Activated B cell treated with CpG ODN at 0.5 μM for 24 hours (primary cell): ENCODE measurements at regions of chr14 and their contacts with region 1.

Region 1: DNA sequence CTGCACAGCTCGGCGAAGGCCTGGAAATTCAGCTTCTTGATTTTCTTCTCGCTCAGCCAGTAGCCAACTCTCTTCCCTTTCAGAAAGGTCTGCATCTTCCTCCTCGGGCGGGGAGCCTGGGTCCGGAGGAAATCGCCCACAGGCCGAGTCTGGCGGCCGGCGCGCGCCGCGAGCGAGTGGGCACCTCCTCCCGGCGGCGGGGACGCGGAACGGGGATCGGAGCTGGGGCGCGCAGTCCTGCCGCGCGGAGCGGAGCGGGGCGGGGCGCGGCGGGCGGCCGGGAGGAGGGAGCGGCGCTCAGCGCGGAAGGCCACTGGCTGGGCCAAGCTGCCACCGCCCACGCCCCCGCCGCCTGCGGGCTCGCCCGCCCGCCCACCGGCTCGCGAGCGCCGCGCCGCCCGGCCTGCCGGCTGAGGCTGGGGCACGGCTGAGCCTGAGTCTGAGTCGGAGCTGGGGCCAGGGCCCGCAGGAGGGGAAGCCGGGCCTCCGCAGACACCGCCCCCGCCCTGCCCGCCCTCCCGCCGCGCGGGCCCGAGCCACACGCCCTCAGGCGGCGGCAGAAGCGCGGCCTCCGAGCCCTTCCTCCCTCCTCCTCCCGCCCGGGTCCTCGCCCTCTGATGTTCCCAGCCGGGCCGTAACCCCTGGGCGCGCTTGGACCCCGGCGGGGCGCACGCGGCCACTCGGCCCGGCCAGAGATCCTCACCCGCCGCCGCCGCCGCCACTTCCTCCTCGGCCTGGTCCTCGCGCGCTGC is 480 bp downstream of the ITPK1 start:
- DNase-seq: peak; percentile 87
- ATAC-seq: peak; percentile 77
- H3K4me3 Mint-ChIP-seq: peak overlapping the region; percentile 91
- H3K27ac Mint-ChIP-seq: peak overlapping the region; percentile 73
- H3K4me1 Mint-ChIP-seq: peaks cover 30% of the 10 kb centered on the region
- H3K27me3 Mint-ChIP-seq: no peaks in the 10 kb centered on the region
- CTCF ChIP-seq: no peak

Region 2: DNA sequence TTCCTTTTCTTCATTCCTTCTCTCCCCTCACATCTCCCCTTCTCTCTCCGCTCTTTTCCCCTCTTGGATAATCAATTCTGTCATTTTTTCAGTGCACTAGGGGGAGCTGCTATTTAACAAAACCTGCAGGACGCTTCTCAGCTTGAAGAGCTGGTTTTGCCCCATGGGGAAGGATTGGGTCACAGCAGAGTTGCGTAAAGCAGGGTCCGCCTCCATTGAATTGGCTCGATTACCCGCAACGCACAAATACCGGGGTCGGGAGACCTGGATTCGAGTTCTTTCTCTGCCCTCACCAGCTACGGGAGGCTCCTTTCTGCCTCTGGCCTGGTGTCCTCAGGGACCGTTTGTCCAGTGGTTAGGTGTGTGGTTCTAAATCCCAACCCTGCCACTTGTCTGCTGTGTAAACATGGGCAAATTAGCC is 234.4 kb before region 1 on chr14:
- CTCF ChIA-PET with region 1: no interaction called
- POLR2A ChIA-PET with region 1: no interaction called
- intact Hi-C with region 1: no loop called
- DNase-seq: no peak
- ATAC-seq: no peak
- H3K4me3 Mint-ChIP-seq: no peak overlapping the region
- H3K27ac Mint-ChIP-seq: no peak overlapping the region
- H3K4me1 Mint-ChIP-seq: no peaks in the 10 kb centered on the region
- H3K27me3 Mint-ChIP-seq: peaks cover 35% of the 10 kb centered on the region
- CTCF ChIP-seq: no peak

Region 3: DNA sequence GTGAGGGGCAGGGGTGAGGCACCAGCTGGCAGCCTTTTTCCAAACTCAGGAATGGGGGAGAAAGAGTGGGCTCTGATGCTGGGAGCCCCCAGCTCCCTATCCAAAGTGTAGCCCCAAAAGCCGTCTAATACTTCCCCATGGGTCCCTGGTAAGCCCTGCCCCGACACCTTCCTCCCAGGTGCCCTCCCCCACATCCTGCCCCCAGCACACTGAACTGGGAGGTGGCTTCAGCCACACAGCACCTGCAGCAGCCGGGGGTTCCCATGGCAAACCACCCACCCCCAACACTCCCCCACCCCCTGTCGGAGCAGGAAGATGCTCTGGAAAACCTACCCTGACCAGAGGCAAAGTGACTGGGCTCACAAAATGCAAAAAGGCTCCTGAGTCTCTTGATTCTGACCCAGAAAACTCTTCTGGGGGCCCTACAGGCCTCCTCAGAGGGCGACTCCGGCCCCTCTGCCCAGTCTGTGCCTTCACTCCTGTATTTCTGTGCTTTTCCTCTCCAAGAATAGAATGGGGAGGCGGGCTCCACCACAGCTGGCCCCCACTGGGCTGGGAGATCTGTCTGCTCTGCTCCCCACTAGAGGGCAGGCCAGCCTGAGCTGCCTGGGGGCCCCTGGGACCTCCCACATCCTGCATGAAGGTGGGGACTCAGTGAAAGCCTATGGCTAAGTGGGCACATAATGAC is 81.1 kb before region 1 on chr14:
- CTCF ChIA-PET with region 1: interaction called, 27 read pairs
- POLR2A ChIA-PET with region 1: interaction called, 6 read pairs
- intact Hi-C with region 1: loop called (anchors 1 kb)
- DNase-seq: peak; percentile 31
- ATAC-seq: peak; percentile 82
- H3K4me3 Mint-ChIP-seq: peak overlapping the region; percentile 59
- H3K27ac Mint-ChIP-seq: peak overlapping the region; percentile 82
- H3K4me1 Mint-ChIP-seq: peaks cover 58% of the 10 kb centered on the region
- H3K27me3 Mint-ChIP-seq: no peaks in the 10 kb centered on the region
- CTCF ChIP-seq: no peak

Region 4: DNA sequence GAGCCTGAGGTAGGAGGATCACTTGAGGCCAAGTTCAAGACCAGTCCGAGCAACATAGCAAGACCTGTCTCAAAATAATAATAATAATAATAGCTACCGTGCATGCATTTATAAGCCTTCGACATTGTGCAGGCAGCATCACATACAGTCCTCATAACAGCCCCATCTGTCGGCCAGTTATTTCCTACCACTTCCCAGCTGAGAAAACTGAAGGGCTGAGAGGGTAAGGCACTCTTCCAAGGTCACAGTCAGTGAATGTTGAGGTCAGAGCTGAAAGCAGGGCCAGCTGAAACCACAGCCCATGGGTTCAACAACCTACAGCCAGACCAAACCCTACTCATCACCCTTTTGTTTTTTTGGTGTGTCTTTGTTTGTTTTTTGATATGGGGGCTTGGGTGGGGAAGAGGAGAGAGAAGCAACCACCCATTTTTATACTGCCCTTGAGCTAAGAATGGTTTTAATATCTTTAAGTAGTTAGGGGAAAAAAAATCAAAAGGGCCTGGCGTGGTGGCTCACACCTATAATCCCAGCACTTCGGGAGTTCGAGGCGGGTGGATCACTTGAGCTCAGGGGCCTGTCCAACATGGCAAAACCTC is 17.3 kb after region 1 on chr14:
- CTCF ChIA-PET with region 1: interaction called, 37 read pairs
- POLR2A ChIA-PET with region 1: interaction called, 3 read pairs
- intact Hi-C with region 1: loop called (anchors 1 kb)
- DNase-seq: no peak
- ATAC-seq: peak; percentile 52
- H3K4me3 Mint-ChIP-seq: no peak overlapping the region
- H3K27ac Mint-ChIP-seq: no peak overlapping the region
- H3K4me1 Mint-ChIP-seq: no peaks in the 10 kb centered on the region
- H3K27me3 Mint-ChIP-seq: no peaks in the 10 kb centered on the region
- CTCF ChIP-seq: no peak

Region 5: DNA sequence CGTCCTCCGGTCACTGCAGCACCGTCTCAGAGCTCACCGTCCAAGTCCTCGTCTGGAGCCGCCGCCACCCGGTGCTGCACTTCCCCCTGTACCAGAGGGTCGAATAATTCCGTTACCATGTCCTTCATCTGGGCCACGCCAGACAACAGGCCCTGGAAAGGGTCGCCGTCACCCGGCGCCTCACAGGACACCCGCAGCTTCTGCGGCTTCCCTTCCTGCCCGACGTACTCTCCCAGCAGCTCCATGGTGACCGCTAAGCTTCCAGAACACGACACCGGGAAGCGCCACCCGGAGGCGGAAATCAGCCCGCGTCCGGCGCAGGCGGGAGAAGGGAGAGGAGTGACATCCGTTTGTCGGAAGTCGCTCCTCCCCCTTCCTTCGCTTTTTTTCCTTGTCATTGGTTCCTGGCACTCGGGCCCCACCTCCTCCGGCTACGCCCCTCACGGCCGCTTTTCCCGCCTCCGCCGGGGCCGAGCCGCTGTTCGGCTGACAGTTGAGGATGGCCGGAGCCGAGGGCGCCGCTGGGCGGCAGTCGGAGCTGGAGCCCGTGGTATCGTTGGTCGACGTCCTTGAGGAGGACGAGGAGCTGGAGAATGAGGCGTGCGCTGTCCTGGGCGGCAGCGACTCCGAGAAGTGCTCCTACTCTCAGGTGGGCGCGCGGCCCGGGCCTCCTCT is 91.7 kb after region 1 on chr14 and contains the starts of genes GON7 and UBR7:
- CTCF ChIA-PET with region 1: interaction called, 5 read pairs
- POLR2A ChIA-PET with region 1: interaction called, 3 read pairs
- intact Hi-C with region 1: loop called (anchors 1 kb)
- DNase-seq: peak; percentile 84
- ATAC-seq: peak; percentile 93
- H3K4me3 Mint-ChIP-seq: peak within 1 kb of the TSS; percentile 96
- H3K27ac Mint-ChIP-seq: peak within 1 kb of the TSS; percentile 90
- H3K4me1 Mint-ChIP-seq: peaks cover 56% of the 10 kb centered on the region
- H3K27me3 Mint-ChIP-seq: no peaks in the 10 kb centered on the region
- CTCF ChIP-seq: no peak
- total RNA-seq, gene GON7: 11.3 and 11.4 TPM in 2 replicates
- total RNA-seq, gene UBR7: 19.3 and 19.5 TPM in 2 replicates

Region 6: DNA sequence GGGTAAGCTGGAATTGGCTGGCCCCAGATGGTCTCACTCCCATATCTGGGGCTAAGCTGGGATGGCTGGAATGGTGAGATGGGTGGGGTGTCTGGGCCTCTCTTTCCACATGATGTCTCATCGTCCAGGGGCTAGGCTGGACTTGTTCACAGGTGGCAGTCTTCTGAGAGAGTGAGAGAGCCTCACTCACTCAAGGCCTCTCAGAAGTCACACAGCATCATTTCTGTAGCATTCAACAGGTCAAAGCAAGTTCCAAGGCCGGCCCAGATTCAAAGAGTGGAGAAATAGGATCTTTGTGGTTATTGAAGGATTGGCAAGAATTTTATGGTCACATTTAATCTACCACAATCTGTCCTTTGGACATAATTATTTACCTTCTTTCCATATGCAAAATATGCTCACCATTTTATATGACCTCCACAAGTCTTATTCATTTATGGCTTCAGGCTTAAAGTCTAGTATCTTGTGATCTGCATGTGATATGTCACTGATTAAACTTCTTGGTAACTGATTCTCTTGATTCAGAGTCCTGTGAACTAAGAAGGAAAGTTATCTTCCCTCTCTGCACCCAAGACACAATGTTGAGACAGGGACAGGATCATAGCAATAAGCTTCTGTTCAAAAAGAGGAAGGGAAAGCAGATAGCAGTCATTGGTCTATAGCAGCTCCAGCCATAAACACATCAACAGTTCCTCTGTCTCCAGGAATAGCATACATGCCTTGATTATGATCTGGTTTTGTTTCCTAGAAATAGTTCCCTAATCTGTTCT is 418.4 kb after region 1 on chr14:
- CTCF ChIA-PET with region 1: interaction called, 3 read pairs
- POLR2A ChIA-PET with region 1: no interaction called
- intact Hi-C with region 1: loop called (anchors 2 kb)
- DNase-seq: no peak
- ATAC-seq: peak; percentile 79
- H3K4me3 Mint-ChIP-seq: peak overlapping the region; percentile 15
- H3K27ac Mint-ChIP-seq: no peak overlapping the region
- H3K4me1 Mint-ChIP-seq: peaks cover 30% of the 10 kb centered on the region
- H3K27me3 Mint-ChIP-seq: no peaks in the 10 kb centered on the region
- CTCF ChIP-seq: no peak

Region 7: DNA sequence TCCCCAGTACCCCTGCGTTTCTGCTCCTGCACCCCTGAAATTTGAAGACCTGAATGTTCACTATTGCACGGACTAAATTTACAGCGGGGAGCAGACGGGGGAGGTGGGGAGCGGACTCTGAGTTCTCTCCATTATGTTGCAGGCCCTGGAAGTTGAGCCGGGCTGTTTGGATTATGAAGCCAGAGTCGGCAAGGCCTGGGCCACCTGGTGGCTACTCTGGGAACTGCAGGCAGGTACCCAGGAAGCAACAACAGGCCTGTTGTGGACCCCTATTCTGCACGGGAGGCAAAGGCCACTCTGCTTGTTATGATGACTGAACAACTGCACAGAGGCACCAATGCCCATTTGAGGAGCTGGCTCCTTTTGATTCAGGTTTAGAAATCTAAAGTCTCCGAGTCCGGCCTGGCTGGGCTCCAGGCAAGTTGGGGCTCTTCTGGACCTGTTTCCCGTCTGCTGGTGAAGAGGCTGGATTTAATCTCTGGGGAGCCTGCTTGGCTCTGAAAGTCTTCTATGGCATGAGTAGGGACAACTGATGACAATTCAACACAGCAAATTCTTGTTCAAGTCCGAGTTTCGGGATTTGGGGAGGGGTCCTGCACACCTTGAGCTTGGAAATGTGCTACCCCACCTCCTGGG is 777.8 kb after region 1 on chr14:
- CTCF ChIA-PET with region 1: no interaction called
- POLR2A ChIA-PET with region 1: no interaction called
- intact Hi-C with region 1: loop called (anchors 5 kb)
- DNase-seq: peak; percentile 71
- ATAC-seq: peak; percentile 65
- H3K4me3 Mint-ChIP-seq: no peak overlapping the region
- H3K27ac Mint-ChIP-seq: no peak overlapping the region
- H3K4me1 Mint-ChIP-seq: no peaks in the 10 kb centered on the region
- H3K27me3 Mint-ChIP-seq: peaks cover 32% of the 10 kb centered on the region
- CTCF ChIP-seq: peak; percentile 56